Activated CD4-positive, alpha-beta memory T cell treated with anti-CD3 and anti-CD28 coated beads for 36 hours (primary cell): ENCODE measurements at regions of chr4 and their contacts with region 1.

Region 1: GRCh38 chr4:5791654-5792053 is 80.7 kb downstream of the EVC start:
- DNase-seq: no peak
- H3K4me3 Mint-ChIP-seq: no peak overlapping the region
- H3K27ac Mint-ChIP-seq: no peak overlapping the region
- H3K4me1 Mint-ChIP-seq: no peaks in the 10 kb centered on the region
- H3K27me3 Mint-ChIP-seq: no peaks in the 10 kb centered on the region

Region 2: DNA sequence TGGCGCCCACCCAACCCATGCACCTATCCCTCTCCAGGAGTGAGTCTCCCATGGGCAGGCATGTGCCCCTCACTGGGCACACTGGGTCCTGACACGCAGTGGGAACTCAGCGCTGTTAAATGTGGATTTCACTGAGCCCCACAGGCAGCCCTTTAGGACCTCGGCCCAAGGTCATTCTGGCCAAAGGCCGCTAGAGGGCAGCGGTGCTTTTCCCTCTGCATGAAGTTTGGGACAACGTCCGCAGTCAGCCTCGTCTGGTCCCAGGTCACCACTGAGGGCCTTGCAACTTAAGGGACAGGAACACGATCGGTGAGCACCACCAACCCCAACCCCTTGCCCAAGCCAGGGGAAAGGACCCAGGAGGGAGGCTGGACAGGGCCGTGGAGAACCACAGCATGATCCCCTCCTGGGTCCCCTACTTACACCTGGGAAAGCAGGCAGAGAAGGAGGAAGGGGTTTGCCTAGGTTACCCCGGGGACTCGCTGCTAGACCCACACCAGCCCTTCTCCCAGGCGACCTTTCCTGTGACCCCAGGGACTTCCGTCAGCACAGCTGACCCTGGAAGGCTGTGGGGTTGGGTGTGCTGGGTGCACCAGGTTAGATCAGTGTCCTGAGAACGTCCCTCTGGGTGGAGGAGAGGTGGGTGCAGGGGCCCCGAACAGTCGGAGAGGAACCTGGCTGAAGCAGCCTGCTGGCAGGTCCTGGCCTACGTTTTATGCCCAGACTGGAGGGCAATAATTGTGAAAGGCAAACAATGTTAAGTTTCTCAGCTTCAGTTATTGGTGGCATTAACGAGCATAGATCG is 796.3 kb before region 1 on chr4:
- CTCF ChIA-PET with region 1: no interaction called
- POLR2A ChIA-PET with region 1: no interaction called
- intact Hi-C with region 1: loop called (anchors 5 kb)
- DNase-seq: peak; percentile 57
- H3K4me3 Mint-ChIP-seq: no peak overlapping the region
- H3K27ac Mint-ChIP-seq: no peak overlapping the region
- H3K4me1 Mint-ChIP-seq: no peaks in the 10 kb centered on the region
- H3K27me3 Mint-ChIP-seq: peaks cover 12% of the 10 kb centered on the region

Region 3: GRCh38 chr4:5399790-5400421 is 391.7 kb before region 1 on chr4:
- CTCF ChIA-PET with region 1: no interaction called
- POLR2A ChIA-PET with region 1: no interaction called
- intact Hi-C with region 1: loop called (anchors 5 kb)
- DNase-seq: no peak
- H3K4me3 Mint-ChIP-seq: no peak overlapping the region
- H3K27ac Mint-ChIP-seq: no peak overlapping the region
- H3K4me1 Mint-ChIP-seq: no peaks in the 10 kb centered on the region
- H3K27me3 Mint-ChIP-seq: no peaks in the 10 kb centered on the region